ENCODE measurements at regions of chr1 and their contacts with region 1.

Region 1: DNA sequence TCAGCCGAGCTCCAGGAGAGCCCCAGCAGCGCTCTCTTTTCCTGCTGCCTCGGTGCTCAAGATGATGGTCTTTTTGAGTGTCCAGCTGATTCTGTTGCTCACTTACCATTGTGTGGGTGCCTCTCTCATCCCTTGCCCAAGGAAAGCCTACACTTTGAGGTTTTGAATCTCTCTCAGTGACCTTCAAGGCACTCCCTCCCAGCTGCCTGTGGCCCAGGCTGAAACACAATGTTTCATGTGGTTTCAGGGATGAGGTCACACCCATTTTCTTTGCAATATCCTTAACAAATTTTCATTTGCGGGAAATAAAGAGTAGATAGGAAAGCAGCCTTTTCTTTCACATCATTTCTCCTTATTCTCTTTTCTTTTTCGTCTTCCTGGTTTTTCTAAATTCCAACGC is 12.6 kb upstream of the MRPS14 start:
- DNase-seq: no peak
- H3K4me3 ChIP-seq: no peak overlapping the region
- H3K27ac ChIP-seq: no peak overlapping the region
- H3K27me3 ChIP-seq: no peaks in the 10 kb centered on the region
- CTCF ChIP-seq: no peak

Region 2: GRCh38 chr1:175124861-175125260 is 89.0 kb after region 1 on chr1:
- intact Hi-C with region 1: loop called (anchors 2 to 5 kb)
- DNase-seq: no peak
- H3K4me3 ChIP-seq: no peak overlapping the region
- H3K27ac ChIP-seq: no peak overlapping the region
- H3K27me3 ChIP-seq: no peaks in the 10 kb centered on the region
- CTCF ChIP-seq: no peak

Region 3: GRCh38 chr1:175129997-175130648 is 94.3 kb after region 1 on chr1:
- intact Hi-C with region 1: loop called (anchors 2 to 5 kb)
- DNase-seq: no peak
- H3K4me3 ChIP-seq: no peak overlapping the region
- H3K27ac ChIP-seq: no peak overlapping the region
- H3K27me3 ChIP-seq: no peaks in the 10 kb centered on the region
- CTCF ChIP-seq: peak in 29 of 56 donors; percentile 11 to 46 (median 29)